Transverse colon (tissue), 4 donors: ENCODE measurements at regions of chr7 and their contacts with region 1.

Region 1: DNA sequence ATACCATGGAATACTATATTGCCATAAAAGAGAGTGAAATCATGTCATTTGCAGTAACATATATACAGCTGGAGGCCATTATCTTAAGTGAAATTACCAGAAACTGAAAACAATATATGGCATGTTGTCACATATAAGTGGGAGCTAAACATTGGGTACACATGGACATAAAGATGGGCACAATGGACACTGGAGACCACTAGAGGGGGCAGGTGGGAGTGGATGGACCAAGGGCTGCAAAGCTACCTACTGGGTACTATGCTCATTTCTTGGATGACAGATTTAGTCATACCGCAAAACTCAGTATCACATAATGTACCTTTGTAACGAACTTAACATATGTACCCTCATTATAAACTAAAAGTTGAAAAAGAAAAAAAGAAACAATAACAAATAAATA is 1167.6 kb downstream of the NXPH1 start:
- DNase-seq: no peak
- H3K4me3 ChIP-seq: no peak overlapping the region
- H3K27ac ChIP-seq: no peak overlapping the region
- H3K4me1 ChIP-seq: no peaks in the 10 kb centered on the region
- H3K27me3 ChIP-seq: no peaks in the 10 kb centered on the region
- CTCF ChIP-seq: no peak
- EP300 ChIP-seq: no peak
- POLR2A ChIP-seq: no peak

Region 2: GRCh38 chr7:9718071-9718661 is 117.2 kb after region 1 on chr7:
- in situ Hi-C with region 1: loop called in 1 of 4 experiments (anchors 25 kb)
- intact Hi-C with region 1: no loop called
- DNase-seq: no peak
- H3K4me3 ChIP-seq: no peak overlapping the region
- H3K27ac ChIP-seq: no peak overlapping the region
- H3K4me1 ChIP-seq: no peaks in the 10 kb centered on the region
- H3K27me3 ChIP-seq: no peaks in the 10 kb centered on the region
- CTCF ChIP-seq: no peak
- EP300 ChIP-seq: no peak
- POLR2A ChIP-seq: no peak

Region 3: GRCh38 chr7:9822458-9823290 is 221.7 kb after region 1 on chr7:
- in situ Hi-C with region 1: no loop called
- intact Hi-C with region 1: no loop called
- DNase-seq: no peak
- H3K4me3 ChIP-seq: no peak overlapping the region
- H3K27ac ChIP-seq: no peak overlapping the region
- H3K4me1 ChIP-seq: no peaks in the 10 kb centered on the region
- H3K27me3 ChIP-seq: no peaks in the 10 kb centered on the region
- CTCF ChIP-seq: no peak
- EP300 ChIP-seq: no peak
- POLR2A ChIP-seq: no peak